Breast epithelium (tissue), 4 donors: ENCODE measurements at regions of chr6 and their contacts with region 1.

Region 1: GRCh38 chr6:104987218-104987617 is 30.3 kb downstream of the LIN28B start:
- DNase-seq: no peak
- H3K4me3 ChIP-seq: no peak overlapping the region
- H3K27ac ChIP-seq: no peak overlapping the region
- H3K4me1 ChIP-seq: no peaks in the 10 kb centered on the region
- H3K27me3 ChIP-seq: no peaks in the 10 kb centered on the region
- CTCF ChIP-seq: no peak
- POLR2A ChIP-seq: no peak

Region 2: GRCh38 chr6:104921896-104922295 is 65.3 kb before region 1 on chr6:
- intact Hi-C with region 1: no loop called
- DNase-seq: no peak
- H3K4me3 ChIP-seq: no peak overlapping the region
- H3K27ac ChIP-seq: no peak overlapping the region
- H3K4me1 ChIP-seq: no peaks in the 10 kb centered on the region
- H3K27me3 ChIP-seq: peaks cover 0 to 4% of the 10 kb centered on the region in 2 donors
- CTCF ChIP-seq: no peak
- POLR2A ChIP-seq: no peak

Region 3: DNA sequence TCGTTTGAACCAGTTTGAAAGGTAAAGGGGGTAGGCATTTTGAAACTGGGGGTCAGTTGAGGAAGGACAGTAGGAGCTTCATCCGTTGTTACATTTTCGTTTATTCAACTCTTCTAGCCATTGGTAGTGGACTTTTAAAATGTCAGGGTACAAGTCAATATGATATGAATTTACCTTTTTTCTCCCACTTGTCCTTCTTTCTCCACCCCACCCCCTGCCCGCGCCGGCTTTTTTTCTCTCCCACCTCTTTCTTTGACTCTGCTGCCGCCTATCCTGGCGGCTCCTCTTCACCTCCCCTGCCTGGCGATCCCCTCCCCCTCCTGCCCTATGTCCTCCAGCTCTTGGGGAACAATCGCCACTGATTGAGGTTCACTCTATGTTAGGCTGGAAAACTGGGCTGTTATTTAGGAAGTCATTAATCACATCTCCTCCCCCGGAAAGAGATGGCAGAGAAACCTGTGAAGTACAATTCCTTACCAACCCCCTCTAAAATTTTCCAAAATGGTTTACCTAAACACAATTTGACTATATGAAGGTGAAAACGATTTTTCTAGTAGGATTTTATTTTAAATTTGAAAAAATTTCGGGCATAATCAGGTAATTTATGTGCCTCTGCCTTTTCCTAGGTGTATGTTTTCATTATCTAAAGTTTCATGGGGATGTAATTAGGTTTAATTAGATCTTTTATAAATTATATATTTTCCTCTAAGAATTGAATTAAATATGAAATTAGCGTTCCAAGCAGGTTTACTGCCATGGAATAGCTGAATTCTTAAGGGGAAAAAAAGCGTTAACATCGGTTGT is 31.1 kb before region 1 on chr6:
- intact Hi-C with region 1: no loop called
- DNase-seq: no peak
- H3K4me3 ChIP-seq: no peak overlapping the region
- H3K27ac ChIP-seq: no peak overlapping the region
- H3K4me1 ChIP-seq: peaks cover 0 to 2% of the 10 kb centered on the region in 2 donors
- H3K27me3 ChIP-seq: peaks cover 0 to 89% of the 10 kb centered on the region in 2 donors
- CTCF ChIP-seq: no peak
- POLR2A ChIP-seq: no peak

Region 4: DNA sequence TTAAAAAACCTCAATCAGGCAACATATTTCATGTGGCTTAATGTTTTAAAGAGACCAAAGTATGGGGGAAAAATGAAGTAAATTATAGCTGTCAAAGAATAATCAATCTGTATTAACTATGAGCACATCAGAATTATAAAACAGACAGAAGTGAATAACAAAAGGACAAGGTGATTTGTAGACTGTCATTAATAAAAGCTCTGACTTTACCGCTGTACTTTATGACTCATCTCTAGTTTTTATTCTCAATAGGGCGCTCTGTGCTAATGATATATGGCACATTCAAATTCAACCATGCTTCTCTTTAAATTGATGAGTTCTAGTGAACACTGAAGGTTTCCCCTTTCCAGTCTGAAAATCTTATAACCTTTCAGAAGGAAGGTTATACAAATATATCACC is 343.7 kb after region 1 on chr6:
- intact Hi-C with region 1: loop called (anchors 10 kb)
- DNase-seq: no peak
- H3K4me3 ChIP-seq: no peak overlapping the region
- H3K27ac ChIP-seq: no peak overlapping the region
- H3K4me1 ChIP-seq: no peaks in the 10 kb centered on the region
- H3K27me3 ChIP-seq: no peaks in the 10 kb centered on the region
- CTCF ChIP-seq: no peak
- POLR2A ChIP-seq: no peak

Region 5: GRCh38 chr6:106979427-106979884 is 1992.2 kb after region 1 on chr6:
- intact Hi-C with region 1: no loop called
- DNase-seq: peak; percentile 75 to 91
- H3K4me3 ChIP-seq: no peak overlapping the region
- H3K27ac ChIP-seq: no peak overlapping the region
- H3K4me1 ChIP-seq: no peaks in the 10 kb centered on the region
- H3K27me3 ChIP-seq: no peaks in the 10 kb centered on the region
- CTCF ChIP-seq: peak; percentile 75 to 92 (median 89)
- POLR2A ChIP-seq: no peak